ENCODE measurements at regions of chr4 and their contacts with region 1.

Region 1: DNA sequence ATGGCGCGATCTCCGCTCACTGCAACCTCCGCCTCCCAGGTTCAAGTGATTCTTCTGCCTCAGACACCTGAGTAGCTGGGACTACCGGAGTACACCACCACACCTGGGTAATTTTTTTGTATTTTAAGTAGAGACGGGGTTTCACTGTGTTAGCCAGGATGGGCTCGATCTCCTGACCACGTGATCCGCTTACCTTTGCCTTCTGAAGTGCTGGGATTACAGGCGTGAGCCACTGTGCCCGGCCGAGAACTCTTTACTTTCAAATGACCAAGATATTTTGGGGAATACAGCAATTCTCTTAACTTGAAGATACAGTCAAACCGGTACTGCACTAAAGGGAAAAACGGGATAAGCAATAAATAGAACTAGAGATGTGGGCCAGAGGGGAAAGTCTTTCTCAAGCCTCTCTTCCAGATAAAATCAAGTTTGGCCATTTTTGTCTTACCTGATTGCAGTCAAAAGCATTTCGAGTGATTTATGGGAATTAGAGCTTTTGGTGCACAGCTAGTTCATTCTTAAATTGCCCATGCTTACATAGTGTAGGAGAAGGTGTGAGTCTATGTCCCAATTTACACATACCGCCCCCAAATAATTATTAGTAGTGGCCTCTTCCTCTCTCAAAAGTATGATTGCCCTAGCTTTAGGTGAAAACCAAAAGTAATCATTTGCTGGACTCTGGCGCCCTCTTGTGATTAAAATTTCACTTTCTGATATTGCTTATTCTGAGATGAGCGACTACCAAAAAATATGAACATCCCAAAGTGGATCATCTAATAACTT is 53.2 kb upstream of the ABCG2 start:
- DNase-seq: peak in 1 of 2 donors; percentile 23
- ATAC-seq: peak; percentile 62

Region 2: GRCh38 chr4:87848622-87849351 is 362.9 kb before region 1 on chr4:
- intact Hi-C with region 1: loop called (anchors 5 to 10 kb)
- DNase-seq: peak in 1 of 2 donors; percentile 23
- ATAC-seq: peak; percentile 74

Region 3: DNA sequence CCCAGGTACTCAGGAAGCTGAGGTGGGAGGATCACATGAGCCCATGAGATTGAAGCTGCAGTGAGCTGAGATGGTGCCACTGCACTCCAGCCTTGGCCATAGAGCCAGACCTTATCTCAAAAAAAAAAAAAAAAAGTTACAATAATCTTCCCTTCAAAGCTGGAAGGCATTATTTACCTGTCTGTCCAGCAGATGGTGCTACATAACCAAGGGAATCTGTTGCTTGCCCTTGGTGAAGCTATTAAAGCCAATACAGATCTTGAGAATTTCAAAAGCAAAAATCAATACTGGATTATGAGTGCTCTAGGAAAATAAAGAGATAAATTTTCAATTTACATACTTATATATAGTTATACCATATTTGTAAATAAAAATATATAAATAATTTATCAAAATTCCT is 178.4 kb before region 1 on chr4:
- intact Hi-C with region 1: loop called in 1 of 2 experiments (anchors 10 kb)
- DNase-seq: peak in 1 of 2 donors; percentile 22
- ATAC-seq: peak; percentile 79

Region 4: DNA sequence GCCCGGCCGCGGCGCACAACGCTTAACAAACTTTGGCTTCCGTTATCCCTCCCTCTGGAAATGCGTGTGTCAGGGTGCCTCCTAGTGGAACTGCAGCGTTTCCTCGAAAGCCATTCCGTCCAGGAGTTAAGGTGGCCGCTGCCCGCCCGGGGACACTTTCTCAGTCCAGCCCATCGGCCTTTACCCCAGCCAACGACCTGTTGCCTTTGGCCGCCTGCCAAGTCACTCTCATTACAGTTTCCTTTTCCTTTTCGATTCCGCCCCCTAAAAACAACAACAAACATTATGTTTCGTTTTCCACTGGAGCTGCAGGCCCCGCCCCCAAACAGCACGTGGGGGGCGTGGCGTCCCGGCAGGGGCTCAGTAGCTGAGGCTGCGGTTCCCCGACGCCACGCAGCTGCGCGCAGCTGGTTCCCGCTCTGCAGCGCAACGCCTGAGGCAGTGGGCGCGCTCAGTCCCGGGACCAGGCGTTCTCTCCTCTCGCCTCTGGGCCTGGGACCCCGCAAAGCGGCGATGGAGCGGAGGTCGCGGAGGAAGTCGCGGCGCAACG is 245.2 kb after region 1 on chr4 and contains the start of gene HERC5:
- intact Hi-C with region 1: loop called in 1 of 2 experiments (anchors 5 kb)
- DNase-seq: peak; percentile 94 to 95
- ATAC-seq: peak; percentile 95
- total RNA-seq, gene HERC5: 0.98 to 1.7 TPM

Measured in left colon (tissue), 2 donors.